Activated CD4-positive, alpha-beta memory T cell treated with anti-CD3 and anti-CD28 coated beads for 36 hours (primary cell): ENCODE measurements at regions of chr2 and their contacts with region 1.

Region 1: DNA sequence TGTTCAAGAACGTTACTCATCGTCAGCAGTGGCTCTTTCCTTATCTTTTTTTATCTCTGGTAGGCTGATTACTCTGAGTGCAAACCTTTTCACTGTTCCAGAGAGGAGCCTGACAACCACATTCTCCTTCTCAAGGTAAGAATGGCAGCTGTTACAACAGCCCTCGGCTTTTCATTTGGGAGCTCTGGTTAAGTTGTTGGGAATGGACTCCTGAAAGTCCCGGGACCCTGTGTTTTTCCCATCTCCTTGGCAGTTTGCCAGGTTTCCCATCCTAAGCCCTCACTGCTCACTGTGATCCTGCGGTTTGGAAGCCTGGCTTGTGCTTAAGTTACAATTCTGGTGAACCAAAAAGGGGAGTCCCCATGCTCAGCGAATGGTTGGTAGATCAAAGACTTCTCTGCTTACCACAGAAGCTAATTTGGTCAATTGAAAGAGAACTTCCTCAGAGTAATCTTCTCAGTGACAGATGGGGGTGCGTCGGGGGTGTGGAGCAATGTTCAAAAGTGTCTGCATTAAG is 122.3 kb downstream of the LYPD6B start:
- DNase-seq: peak; percentile 43
- H3K4me3 Mint-ChIP-seq: no peak overlapping the region
- H3K27ac Mint-ChIP-seq: no peak overlapping the region
- H3K4me1 Mint-ChIP-seq: peaks cover 17% of the 10 kb centered on the region
- H3K27me3 Mint-ChIP-seq: peaks cover 11% of the 10 kb centered on the region

Region 2: DNA sequence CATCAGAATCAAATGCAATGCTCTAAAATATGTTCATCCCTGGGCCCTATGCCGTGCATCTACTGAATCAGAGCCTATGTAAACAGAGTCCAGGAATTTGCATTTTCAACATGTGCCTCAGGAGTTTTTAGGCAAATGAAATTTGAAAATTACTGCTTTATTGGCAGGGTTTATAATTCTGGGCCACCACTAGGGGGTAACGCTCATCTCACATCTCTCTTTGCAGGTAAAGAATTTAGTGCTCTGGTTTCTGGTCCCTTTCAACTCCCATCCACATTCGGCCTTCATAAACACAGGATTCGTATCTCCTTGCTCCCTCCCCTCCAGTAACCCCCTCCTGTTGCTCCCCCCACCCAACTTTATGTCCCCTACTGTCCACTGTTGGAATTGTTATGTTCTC is 73.0 kb before region 1 on chr2:
- CTCF ChIA-PET with region 1: no interaction called
- POLR2A ChIA-PET with region 1: no interaction called
- intact Hi-C with region 1: loop called (anchors 5 kb)
- DNase-seq: no peak
- H3K4me3 Mint-ChIP-seq: no peak overlapping the region
- H3K27ac Mint-ChIP-seq: no peak overlapping the region
- H3K4me1 Mint-ChIP-seq: no peaks in the 10 kb centered on the region
- H3K27me3 Mint-ChIP-seq: peaks cover 4% of the 10 kb centered on the region

Region 3: GRCh38 chr2:149538138-149538833 is 377.5 kb after region 1 on chr2:
- CTCF ChIA-PET with region 1: no interaction called
- POLR2A ChIA-PET with region 1: no interaction called
- intact Hi-C with region 1: loop called (anchors 10 kb)
- DNase-seq: no peak
- H3K4me3 Mint-ChIP-seq: no peak overlapping the region
- H3K27ac Mint-ChIP-seq: no peak overlapping the region
- H3K4me1 Mint-ChIP-seq: peaks cover 12% of the 10 kb centered on the region
- H3K27me3 Mint-ChIP-seq: no peaks in the 10 kb centered on the region